Psoas muscle (tissue), 8 donors: ENCODE measurements at regions of chr1 and their contacts with region 1.

Region 1: GRCh38 chr1:36355767-36356166 is 30.0 kb downstream of the STK40 start:
- DNase-seq: no peak
- ATAC-seq: no peak
- H3K4me3 ChIP-seq: no peak overlapping the region
- H3K27ac ChIP-seq: no peak overlapping the region
- H3K4me1 ChIP-seq: peaks cover 31% of the 10 kb centered on the region
- H3K27me3 ChIP-seq: no peaks in the 10 kb centered on the region
- CTCF ChIP-seq: no peak

Region 2: GRCh38 chr1:36342481-36343478 is 13.0 kb before region 1 on chr1:
- intact Hi-C with region 1: loop called in 1 of 2 experiments (anchors 1 kb)
- DNase-seq: peak; percentile 52 to 80
- ATAC-seq: peak; percentile 58 to 67 (median 64)
- H3K4me3 ChIP-seq: no peak overlapping the region
- H3K27ac ChIP-seq: peak overlapping the region; percentile 78
- H3K4me1 ChIP-seq: peaks cover 38% of the 10 kb centered on the region
- H3K27me3 ChIP-seq: no peaks in the 10 kb centered on the region
- CTCF ChIP-seq: peak; percentile 55